ENCODE measurements at regions of chr19 and their contacts with region 1.

Region 1: DNA sequence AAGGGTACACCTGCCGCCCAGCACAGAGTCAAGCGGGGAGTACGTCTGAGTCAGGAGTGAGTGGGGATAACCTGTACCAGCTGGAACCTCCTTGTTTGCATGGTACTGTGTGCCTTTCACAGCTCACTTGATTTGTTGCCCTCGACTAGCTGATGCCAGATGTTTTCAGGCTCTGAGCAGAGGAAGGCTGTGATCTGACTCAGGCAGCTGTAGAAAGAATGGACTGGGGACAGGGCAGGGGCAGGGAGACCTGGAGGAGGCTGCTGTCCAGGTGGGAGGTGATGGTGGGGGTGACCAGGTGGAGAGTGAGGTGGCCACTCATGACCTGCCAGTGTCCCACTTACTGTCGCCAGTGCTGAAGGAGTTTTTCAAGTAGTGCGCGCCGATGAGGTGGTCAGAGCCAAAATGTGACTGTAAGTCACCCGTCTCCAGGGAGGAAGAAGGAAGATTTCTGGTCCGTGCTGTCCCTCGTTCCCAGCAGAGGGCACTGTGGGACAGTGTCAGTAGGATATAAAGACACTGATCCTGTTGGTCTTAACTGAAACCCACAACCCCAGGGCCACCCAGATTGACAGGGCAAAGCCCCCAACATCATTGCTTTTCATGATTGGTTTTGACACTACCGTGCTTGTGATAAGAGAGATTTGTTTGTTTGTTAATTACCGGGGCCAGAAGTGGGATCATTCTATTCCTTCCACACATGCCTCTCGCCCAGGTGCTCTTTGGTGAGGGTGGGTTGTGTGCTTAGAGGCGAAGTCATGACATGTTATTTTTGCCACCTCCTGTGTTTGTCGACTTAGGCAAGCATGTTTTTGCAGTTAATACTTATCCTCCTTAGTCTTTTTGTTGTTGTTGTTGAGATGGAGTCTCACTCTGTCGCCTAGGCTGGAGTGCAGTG is 128.4 kb downstream of the DPF1 start:
- DNase-seq: peak; percentile 44 to 85
- H3K4me3 ChIP-seq: no peak overlapping the region
- H3K27ac ChIP-seq: no peak overlapping the region
- H3K4me1 ChIP-seq: peaks cover 0 to 2% (median 0%) of the 10 kb centered on the region in 4 experiments; a peak in 3 of 7 replicates
- H3K27me3 ChIP-seq: no peaks in the 10 kb centered on the region
- CTCF ChIP-seq: peak; percentile 77 to 95 (median 93)
- EP300 ChIP-seq: no peak
- POLR2A ChIP-seq: no peak
- RAD21 ChIP-seq: peak; percentile 77

Region 2: GRCh38 chr19:38107129-38107528 is 11.5 kb after region 1 on chr19:
- CTCF ChIA-PET with region 1: interaction called, 10 read pairs
- POLR2A ChIA-PET with region 1: no interaction called
- DNase-seq: no peak
- H3K4me3 ChIP-seq: no peak overlapping the region
- H3K27ac ChIP-seq: no peak overlapping the region
- H3K4me1 ChIP-seq: no peaks in the 10 kb centered on the region
- H3K27me3 ChIP-seq: no peaks in the 10 kb centered on the region; a peak in 1 of 7 replicates
- CTCF ChIP-seq: no peak
- EP300 ChIP-seq: no peak
- POLR2A ChIP-seq: no peak
- RAD21 ChIP-seq: no peak

Measured in H1 (cell line).